Dendritic cell treated with granulocyte-macrophage colony-stimulating factor and Interleukin-4, amounts not matched to agents 40 ng/mL and 50 ng/mL, for 4 days (primary cell): ENCODE measurements at regions of chr4 and their contacts with region 1.

Region 1: DNA sequence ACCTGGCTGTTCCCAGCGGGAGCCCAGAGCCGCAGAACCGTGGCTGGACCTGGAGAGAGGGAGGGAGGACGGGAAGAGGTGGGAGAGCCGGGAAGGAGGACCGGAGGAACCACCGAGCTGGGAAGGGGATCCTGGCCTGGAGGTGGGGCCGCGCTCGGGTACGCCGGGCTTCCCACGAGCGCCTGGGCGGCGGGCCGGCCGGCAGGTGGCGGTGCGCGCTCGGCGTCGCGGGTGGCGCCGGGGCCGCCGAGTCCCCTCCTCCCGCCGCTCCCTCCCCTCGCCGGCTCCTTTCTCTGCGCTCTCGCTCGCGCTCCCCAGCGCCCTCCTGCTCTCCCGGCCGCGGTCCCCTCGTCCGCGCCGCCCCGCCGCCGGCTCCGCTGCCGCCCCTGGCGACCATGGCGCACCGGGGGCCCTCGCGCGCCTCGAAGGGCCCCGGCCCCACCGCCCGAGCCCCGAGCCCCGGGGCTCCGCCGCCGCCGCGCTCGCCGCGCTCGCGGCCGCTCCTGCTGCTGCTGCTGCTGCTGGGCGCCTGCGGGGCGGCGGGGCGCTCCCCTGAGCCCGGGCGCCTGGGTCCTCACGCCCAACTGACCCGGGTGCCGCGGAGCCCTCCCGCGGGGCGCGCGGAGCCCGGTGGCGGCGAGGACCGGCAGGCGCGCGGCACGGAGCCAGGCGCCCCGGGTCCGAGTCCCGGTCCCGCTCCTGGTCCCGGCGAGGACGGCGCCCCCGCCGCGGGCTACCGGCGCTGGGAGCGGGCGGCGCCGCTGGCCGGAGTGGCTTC is at the start of gene SORCS2:
- H3K4me3 Mint-ChIP-seq: no peak within 1 kb of the TSS
- H3K27ac Mint-ChIP-seq: no peak within 1 kb of the TSS
- H3K4me1 Mint-ChIP-seq: no peaks in the 10 kb centered on the region
- H3K27me3 Mint-ChIP-seq: peaks cover 52% of the 10 kb centered on the region

Region 2: DNA sequence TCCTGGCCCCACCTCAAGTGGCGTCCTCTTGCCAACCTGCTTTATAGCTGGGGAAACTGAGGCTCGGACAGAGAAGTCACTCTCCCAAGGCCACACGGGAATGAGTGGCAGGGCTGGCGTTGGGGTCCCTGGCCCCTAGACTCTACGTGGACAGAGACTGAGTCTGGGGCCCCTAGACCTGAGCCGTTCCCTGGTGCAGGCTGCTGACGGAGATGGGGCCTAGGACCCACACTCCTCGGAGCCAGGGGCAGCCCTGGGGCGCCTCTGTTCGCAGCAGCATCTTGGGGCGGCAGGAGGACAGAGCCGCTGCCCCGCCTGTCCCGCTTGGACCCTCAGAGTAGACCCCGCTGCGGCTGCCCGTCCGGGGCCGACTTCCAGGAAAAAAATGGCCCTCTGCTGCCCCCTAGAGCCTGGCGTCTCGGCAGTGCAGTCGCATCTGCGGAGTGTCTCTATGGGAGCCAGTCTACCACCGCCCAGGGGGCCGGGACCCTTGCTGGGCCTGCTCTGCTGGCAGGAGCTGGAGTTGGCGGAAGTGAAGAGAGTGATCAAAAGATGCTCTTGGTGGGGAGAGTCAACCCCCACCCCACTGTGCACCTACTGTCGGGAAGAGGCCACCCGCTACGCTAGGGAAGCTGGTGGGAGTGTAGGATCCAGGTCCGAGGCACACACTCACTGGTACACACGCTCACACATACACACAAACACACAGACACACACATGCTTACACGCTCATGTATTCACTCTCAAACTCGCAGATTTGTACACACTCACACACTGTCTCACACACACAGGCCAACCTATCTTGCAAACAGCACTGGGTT is 527.1 kb after region 1 on chr4:
- intact Hi-C with region 1: loop called (anchors 2 kb)
- H3K4me3 Mint-ChIP-seq: no peak overlapping the region
- H3K27ac Mint-ChIP-seq: no peak overlapping the region
- H3K4me1 Mint-ChIP-seq: peaks cover 26% of the 10 kb centered on the region
- H3K27me3 Mint-ChIP-seq: peaks cover 49% of the 10 kb centered on the region